B cell (primary cell): ENCODE measurements at regions of chr5 and their contacts with region 1.

Region 1: GRCh38 chr5:115209279-115209678 is 39.6 kb upstream of the TRIM36 start:
- DNase-seq: peak; percentile 91
- ATAC-seq: peak; percentile 97
- H3K4me3 ChIP-seq: no peak overlapping the region
- H3K4me3 Mint-ChIP-seq: peak overlapping the region; percentile 70
- H3K27ac ChIP-seq: peak overlapping the region in 1 of 2 donors; percentile 39
- H3K27ac Mint-ChIP-seq: peak overlapping the region; percentile 74
- H3K4me1 ChIP-seq: peaks cover 10 to 20% of the 10 kb centered on the region in 2 donors
- H3K4me1 Mint-ChIP-seq: peaks cover 19% of the 10 kb centered on the region
- H3K27me3 ChIP-seq: no peaks in the 10 kb centered on the region
- H3K27me3 Mint-ChIP-seq: no peaks in the 10 kb centered on the region
- CTCF ChIP-seq: no peak

Region 2: DNA sequence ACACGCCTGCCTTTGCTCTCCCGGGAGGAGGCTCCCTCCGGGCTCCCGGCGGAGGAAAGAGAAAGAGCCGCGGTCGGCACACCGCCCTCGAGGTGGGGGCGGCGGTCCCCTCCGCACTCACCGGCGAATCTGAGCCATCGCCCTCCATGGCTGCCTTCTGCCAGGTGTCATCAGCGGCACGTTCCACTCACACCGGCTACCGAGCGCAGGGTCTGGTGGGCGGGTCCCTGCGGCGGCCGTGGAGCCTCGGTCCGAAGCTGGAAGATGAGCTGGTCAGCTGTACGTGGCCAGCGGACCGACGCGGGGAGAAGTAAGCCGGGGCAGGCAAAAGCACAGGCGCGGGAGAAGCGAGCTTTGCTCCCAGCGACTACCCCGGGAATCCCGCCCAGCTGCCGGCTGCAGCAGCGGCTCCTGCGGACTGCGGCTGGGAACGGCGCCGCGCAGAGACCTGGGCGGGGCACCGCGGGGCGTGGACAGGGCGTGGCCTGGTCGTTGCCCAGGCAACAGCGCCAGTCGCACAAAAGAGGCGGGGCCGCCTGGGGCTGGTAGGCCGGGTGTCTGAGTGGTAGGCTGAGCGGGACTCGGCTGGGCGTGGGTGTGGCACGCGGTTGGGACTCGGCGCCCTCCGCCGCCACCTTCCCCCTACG is 39.7 kb before region 1 on chr5 and contains the start of gene TRIM36:
- CTCF ChIA-PET with region 1: no interaction called
- POLR2A ChIA-PET with region 1: no interaction called
- intact Hi-C with region 1: loop called (anchors 1 kb)
- DNase-seq: peak; percentile 94
- ATAC-seq: peak; percentile 92
- H3K4me3 ChIP-seq: peak within 1 kb of the TSS; percentile 53 to 89 (median 75)
- H3K4me3 Mint-ChIP-seq: peak within 1 kb of the TSS; percentile 92
- H3K27ac ChIP-seq: no peak within 1 kb of the TSS
- H3K27ac Mint-ChIP-seq: peak within 1 kb of the TSS; percentile 80
- H3K4me1 ChIP-seq: peaks cover 20 to 21% of the 10 kb centered on the region in 2 donors
- H3K4me1 Mint-ChIP-seq: peaks cover 14% of the 10 kb centered on the region
- H3K27me3 ChIP-seq: peaks cover 0 to 62% (median 32%) of the 10 kb centered on the region in 4 experiments
- H3K27me3 Mint-ChIP-seq: peaks cover 59% of the 10 kb centered on the region
- CTCF ChIP-seq: no peak
- total RNA-seq, gene TRIM36: 0.39 and 1.6 TPM in 2 replicates

Region 3: DNA sequence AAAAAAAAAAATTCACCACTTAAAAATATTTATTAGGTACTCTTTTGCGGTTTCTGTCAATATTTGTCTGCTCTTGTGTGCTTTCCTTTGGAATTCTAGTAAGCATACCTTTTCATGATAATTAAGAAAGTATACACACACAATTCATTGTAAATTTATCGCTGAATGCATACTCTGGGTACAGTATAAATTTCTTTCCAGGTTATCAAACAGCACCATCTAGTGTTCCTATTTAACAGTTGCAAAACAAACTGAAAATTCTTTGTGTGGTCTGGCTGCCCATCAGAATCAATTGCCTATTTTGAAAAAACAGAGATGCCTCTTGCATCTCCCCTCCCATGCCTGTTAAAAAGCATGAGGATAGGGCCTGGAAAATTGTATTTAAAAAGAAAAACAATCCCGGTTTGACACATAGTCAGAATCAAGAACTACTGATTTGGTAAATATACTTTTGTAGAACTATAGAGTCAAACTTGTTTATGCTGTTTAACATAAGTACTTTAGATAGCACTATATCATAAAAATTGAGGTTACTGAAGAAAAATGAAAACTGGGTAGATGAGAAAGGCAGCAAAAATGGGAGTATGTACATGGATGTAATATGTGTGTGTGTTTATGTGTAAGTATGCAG is 37.2 kb after region 1 on chr5:
- CTCF ChIA-PET with region 1: interaction called, 4 read pairs
- POLR2A ChIA-PET with region 1: no interaction called
- intact Hi-C with region 1: loop called (anchors 5 kb)
- DNase-seq: peak; percentile 58
- ATAC-seq: peak; percentile 53
- H3K4me3 ChIP-seq: no peak overlapping the region
- H3K4me3 Mint-ChIP-seq: no peak overlapping the region
- H3K27ac ChIP-seq: no peak overlapping the region
- H3K27ac Mint-ChIP-seq: no peak overlapping the region
- H3K4me1 ChIP-seq: no peaks in the 10 kb centered on the region
- H3K4me1 Mint-ChIP-seq: peaks cover 15% of the 10 kb centered on the region
- H3K27me3 ChIP-seq: no peaks in the 10 kb centered on the region
- H3K27me3 Mint-ChIP-seq: no peaks in the 10 kb centered on the region
- CTCF ChIP-seq: peak; percentile 93

Region 4: GRCh38 chr5:115262321-115263077 is 53.2 kb after region 1 on chr5 and contains the start of gene PGGT1B:
- CTCF ChIA-PET with region 1: no interaction called
- POLR2A ChIA-PET with region 1: no interaction called
- intact Hi-C with region 1: loop called (anchors 1 kb)
- DNase-seq: peak; percentile 84
- ATAC-seq: peak; percentile 90
- H3K4me3 ChIP-seq: peak within 1 kb of the TSS; percentile 78 to 97 (median 87)
- H3K4me3 Mint-ChIP-seq: peak within 1 kb of the TSS; percentile 92
- H3K27ac ChIP-seq: peak within 1 kb of the TSS; percentile 88 to 92
- H3K27ac Mint-ChIP-seq: peak within 1 kb of the TSS; percentile 92
- H3K4me1 ChIP-seq: peaks cover 20 to 26% of the 10 kb centered on the region in 2 donors
- H3K4me1 Mint-ChIP-seq: peaks cover 49% of the 10 kb centered on the region
- H3K27me3 ChIP-seq: no peaks in the 10 kb centered on the region
- H3K27me3 Mint-ChIP-seq: no peaks in the 10 kb centered on the region
- CTCF ChIP-seq: no peak
- total RNA-seq, gene PGGT1B: 63.4 and 64.8 TPM in 2 replicates

Region 5: DNA sequence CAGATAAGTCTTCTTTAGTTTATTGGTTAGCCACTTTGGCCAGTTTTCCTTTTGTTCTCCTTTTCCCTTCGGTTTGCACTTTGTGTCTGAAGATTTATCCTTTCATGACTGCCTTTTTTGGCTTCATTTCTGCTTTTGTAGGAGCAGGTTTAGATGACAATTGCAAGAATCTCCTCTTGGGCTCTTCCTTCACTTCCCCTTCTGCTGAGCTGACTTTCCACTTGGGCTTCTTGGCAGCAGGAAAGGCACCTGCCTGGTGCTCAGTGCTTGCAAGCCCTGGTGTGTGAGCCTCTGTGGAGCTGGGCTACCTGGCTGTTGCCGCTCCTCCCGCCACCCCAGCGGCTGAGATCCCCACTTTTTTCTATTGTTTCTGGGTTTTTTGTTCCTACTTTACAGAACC is 79.8 kb after region 1 on chr5:
- CTCF ChIA-PET with region 1: no interaction called
- POLR2A ChIA-PET with region 1: no interaction called
- intact Hi-C with region 1: loop called (anchors 5 kb)
- DNase-seq: no peak
- ATAC-seq: no peak
- H3K4me3 ChIP-seq: no peak overlapping the region
- H3K4me3 Mint-ChIP-seq: no peak overlapping the region
- H3K27ac ChIP-seq: no peak overlapping the region
- H3K27ac Mint-ChIP-seq: no peak overlapping the region
- H3K4me1 ChIP-seq: no peaks in the 10 kb centered on the region
- H3K4me1 Mint-ChIP-seq: peaks cover 12% of the 10 kb centered on the region
- H3K27me3 ChIP-seq: no peaks in the 10 kb centered on the region
- H3K27me3 Mint-ChIP-seq: no peaks in the 10 kb centered on the region
- CTCF ChIP-seq: no peak